ENCODE measurements at regions of chr2 and their contacts with region 1.

Region 1: DNA sequence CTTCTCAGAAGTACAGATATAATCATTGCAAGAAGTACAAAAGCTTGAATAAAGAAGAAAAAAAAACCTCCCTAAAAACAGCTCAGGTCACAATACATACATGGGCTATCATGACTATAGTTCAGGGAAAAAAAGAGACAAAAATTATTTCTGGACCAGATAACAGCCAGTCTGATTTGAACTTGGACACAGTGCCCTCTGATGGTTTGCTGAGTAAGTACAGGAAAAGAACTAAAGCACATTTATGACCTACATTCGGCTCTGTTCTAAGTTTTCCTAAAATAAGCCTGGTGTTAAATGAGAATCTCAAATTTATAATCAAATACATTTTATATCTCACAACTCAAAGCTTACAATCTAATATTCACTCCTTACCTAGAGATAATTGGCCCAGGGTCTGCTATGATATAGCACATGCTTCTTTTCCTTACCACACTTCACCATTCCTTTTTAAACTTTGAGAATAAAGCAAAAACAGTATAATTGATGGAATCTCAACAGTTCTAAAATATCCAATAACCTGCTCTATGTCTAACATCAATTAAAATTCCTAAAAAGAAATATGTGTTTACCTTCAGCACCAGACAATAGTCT is 81.1 kb downstream of the RAPH1 start:
- DNase-seq: no peak
- H3K4me3 ChIP-seq: no peak overlapping the region
- H3K27ac ChIP-seq: no peak overlapping the region
- H3K4me1 ChIP-seq: no peaks in the 10 kb centered on the region
- H3K27me3 ChIP-seq: no peaks in the 10 kb centered on the region
- CTCF ChIP-seq: peak; percentile 27 to 66 (median 60)
- POLR2A ChIP-seq: no peak

Region 2: DNA sequence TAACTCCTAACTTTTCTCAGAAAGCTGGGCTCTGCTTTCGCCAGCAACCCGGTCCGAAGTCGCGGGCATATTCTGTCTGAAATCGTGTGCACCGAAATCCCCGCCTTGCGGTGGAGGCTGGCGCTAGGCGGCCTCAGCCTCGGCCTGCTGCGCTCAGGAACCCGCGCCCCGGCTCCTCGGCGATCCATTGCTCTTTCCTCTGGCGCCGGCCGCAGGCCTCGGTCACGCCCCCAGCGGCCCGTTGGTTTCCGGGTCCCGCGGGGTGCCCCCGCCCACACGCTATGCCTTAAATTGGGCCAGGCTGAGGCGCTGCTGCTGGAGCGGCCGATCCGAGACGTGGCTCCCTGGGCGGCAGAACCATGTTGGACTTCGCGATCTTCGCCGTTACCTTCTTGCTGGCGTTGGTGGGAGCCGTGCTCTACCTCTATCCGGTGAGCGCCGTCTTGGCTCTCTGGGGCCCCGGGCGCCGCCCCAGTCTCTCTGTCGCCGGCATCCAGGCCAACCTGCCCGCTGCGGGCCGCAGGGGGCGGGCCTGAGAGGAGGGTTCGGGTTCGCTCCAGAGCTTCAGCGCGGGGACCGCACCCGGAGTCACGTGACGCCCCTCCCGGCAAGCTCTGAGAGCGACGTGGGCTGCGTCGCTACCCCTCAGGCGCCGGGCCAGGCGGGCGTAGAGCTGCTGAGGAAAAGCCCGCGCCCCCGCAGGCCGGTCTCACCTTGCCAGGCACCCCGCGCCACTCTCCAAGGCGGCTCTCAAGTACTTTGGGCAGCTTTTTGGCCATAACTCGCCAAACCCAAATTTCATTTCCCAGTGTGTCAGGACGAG is 215.0 kb before region 1 on chr2 and contains the start of gene CYP20A1:
- intact Hi-C with region 1: loop called (anchors 10 kb)
- DNase-seq: peak; percentile 94
- H3K4me3 ChIP-seq: peak within 1 kb of the TSS; percentile 68 to 84
- H3K27ac ChIP-seq: peak within 1 kb of the TSS; percentile 95 to 96
- H3K4me1 ChIP-seq: no peaks in the 10 kb centered on the region
- H3K27me3 ChIP-seq: no peaks in the 10 kb centered on the region
- CTCF ChIP-seq: peak; percentile 11 to 57 (median 40)
- POLR2A ChIP-seq: peak; percentile 60
- total RNA-seq, gene CYP20A1: 35.1 to 35.4 TPM

Region 3: GRCh38 chr2:203276114-203276513 is 177.8 kb before region 1 on chr2:
- intact Hi-C with region 1: no loop called
- DNase-seq: no peak
- H3K4me3 ChIP-seq: no peak overlapping the region
- H3K27ac ChIP-seq: no peak overlapping the region
- H3K4me1 ChIP-seq: no peaks in the 10 kb centered on the region
- H3K27me3 ChIP-seq: no peaks in the 10 kb centered on the region
- CTCF ChIP-seq: no peak
- POLR2A ChIP-seq: no peak

Region 4: DNA sequence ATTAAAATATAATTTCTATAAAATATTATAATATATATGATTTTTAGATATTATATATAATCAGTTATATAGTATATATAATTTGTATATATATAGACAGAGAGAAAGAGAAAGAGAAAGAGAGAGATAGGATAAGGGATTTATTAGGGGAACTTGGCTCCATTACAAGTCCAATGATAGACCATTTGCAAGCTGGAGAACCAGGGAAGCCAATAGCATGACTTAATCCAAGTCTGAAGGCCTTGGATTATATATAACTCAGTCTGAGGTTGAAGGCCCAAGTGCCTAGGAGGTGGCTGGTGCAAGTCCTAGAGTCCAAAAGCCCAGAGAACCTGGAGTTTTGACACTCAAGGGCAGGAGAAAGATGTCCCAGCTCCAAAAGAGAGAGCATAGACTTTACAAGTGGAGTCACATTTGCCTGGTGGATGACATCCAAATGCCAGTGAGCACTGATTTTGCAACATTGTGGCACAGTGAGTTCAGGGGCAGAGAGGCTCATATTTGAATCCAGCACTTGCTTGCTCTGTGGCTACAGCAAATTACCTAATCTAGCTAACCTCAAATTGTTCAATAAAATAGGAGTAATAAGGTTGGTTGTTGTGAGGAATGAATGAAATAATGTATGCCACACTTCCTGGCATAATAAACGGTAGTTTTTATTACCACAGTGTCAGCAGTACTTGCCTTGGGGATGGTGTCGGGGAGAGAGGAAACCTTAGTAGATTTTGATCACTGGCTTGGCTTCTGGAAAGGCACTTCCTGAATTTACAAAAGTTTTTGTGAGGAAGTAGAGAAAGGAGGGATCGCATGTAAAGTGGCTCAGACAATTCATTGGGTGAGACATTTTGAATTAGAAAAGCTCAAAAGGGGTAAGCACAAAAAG is 182.9 kb after region 1 on chr2:
- intact Hi-C with region 1: no loop called
- DNase-seq: peak; percentile 63
- H3K4me3 ChIP-seq: no peak overlapping the region
- H3K27ac ChIP-seq: peak overlapping the region in 1 of 2 donors; percentile 13
- H3K4me1 ChIP-seq: no peaks in the 10 kb centered on the region
- H3K27me3 ChIP-seq: no peaks in the 10 kb centered on the region
- CTCF ChIP-seq: no peak
- POLR2A ChIP-seq: no peak

Measured in prostate gland (tissue), 2 donors.